Panc1 (cell line): ENCODE measurements at regions of chr20 and their contacts with region 1.

Region 1: GRCh38 chr20:49603209-49603627 is 35.3 kb upstream of the PTGIS start:
- DNase-seq: no peak
- ATAC-seq: peak; percentile 76
- H3K4me3 ChIP-seq: no peak overlapping the region
- H3K27ac ChIP-seq: 0 out of 2 replicates have a peak overlapping the region, but pooled peaks have one; percentile 20
- H3K4me1 ChIP-seq: peaks cover 15% of the 10 kb centered on the region
- H3K27me3 ChIP-seq: no peaks in the 10 kb centered on the region
- CTCF ChIP-seq: peak; percentile 34

Region 2: GRCh38 chr20:49541733-49542513 is 61.3 kb before region 1 on chr20:
- CTCF ChIA-PET with region 1: interaction called, 31 read pairs
- POLR2A ChIA-PET with region 1: no interaction called
- in situ Hi-C with region 1: no loop called
- intact Hi-C with region 1: no loop called
- DNase-seq: peak; percentile 56
- ATAC-seq: peak; percentile 79
- H3K4me3 ChIP-seq: no peak overlapping the region
- H3K27ac ChIP-seq: peak overlapping the region; percentile 30; the same call in 1 of the 2 replicates
- H3K4me1 ChIP-seq: peaks cover 6% of the 10 kb centered on the region; the same call in 1 of the 2 replicates
- H3K27me3 ChIP-seq: no peaks in the 10 kb centered on the region
- CTCF ChIP-seq: peak; percentile 96

Region 3: GRCh38 chr20:50020288-50020687 is 417.1 kb after region 1 on chr20:
- CTCF ChIA-PET with region 1: no interaction called
- POLR2A ChIA-PET with region 1: no interaction called
- in situ Hi-C with region 1: no loop called
- intact Hi-C with region 1: no loop called
- DNase-seq: no peak
- ATAC-seq: peak; percentile 84
- H3K4me3 ChIP-seq: no peak overlapping the region
- H3K27ac ChIP-seq: no peak overlapping the region
- H3K4me1 ChIP-seq: peaks cover 21% of the 10 kb centered on the region
- H3K27me3 ChIP-seq: no peaks in the 10 kb centered on the region
- CTCF ChIP-seq: no peak